Lower leg skin (tissue), 4 donors: ENCODE measurements at regions of chr4 and their contacts with region 1.

Region 1: GRCh38 chr4:113761620-113762185 is at the start of gene CAMK2D:
- DNase-seq: peak; percentile 77 to 96
- H3K4me3 ChIP-seq: peak within 1 kb of the TSS; percentile 91
- CTCF ChIP-seq: peak in 1 of 3 donors; percentile 51
- POLR2A ChIP-seq: no peak
- total RNA-seq, gene CAMK2D: 25.2 to 40.7 (median 32.7) TPM

Region 2: GRCh38 chr4:113404841-113405240 is 356.9 kb before region 1 on chr4:
- intact Hi-C with region 1: loop called (anchors 10 kb)
- DNase-seq: no peak
- H3K4me3 ChIP-seq: no peak overlapping the region
- CTCF ChIP-seq: no peak
- POLR2A ChIP-seq: no peak